ENCODE measurements at regions of chr7 and their contacts with region 1.

Region 1: DNA sequence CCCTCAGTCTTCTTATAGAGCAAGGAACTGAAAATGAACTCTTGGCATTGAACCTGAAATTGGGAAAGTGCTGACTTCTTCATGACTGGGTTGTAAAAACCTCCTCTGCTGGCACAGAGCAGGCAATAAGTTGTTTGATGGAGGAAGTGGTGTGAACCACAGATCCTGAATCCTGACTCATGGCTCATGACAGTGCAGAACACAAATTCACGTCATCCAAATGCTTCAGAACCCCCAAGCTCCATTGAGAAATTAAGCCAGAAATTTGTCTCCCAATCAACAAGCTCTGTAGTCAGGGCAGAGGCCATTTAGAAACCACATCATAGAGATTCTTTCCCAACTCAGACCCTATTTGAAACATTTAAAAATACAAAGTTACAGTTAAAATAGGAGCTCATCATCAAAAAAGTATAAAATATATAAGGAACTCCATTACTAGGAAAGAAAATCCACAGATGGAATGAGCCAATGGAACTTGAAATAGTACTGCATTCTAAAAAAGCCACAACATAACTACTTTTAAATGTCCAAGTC is 10.3 kb upstream of the STK17A start:
- DNase-seq: peak; percentile 30
- H3K4me3 Mint-ChIP-seq: no peak overlapping the region
- H3K27ac Mint-ChIP-seq: no peak overlapping the region
- H3K4me1 Mint-ChIP-seq: peaks cover 37% of the 10 kb centered on the region
- H3K27me3 Mint-ChIP-seq: no peaks in the 10 kb centered on the region

Region 2: GRCh38 chr7:43314379-43315189 is 258.0 kb before region 1 on chr7:
- intact Hi-C with region 1: loop called (anchors 10 kb)
- DNase-seq: no peak
- H3K4me3 Mint-ChIP-seq: no peak overlapping the region
- H3K27ac Mint-ChIP-seq: no peak overlapping the region
- H3K4me1 Mint-ChIP-seq: peaks cover 15% of the 10 kb centered on the region
- H3K27me3 Mint-ChIP-seq: peaks cover 24% of the 10 kb centered on the region

Region 3: GRCh38 chr7:43516581-43517342 is 55.8 kb before region 1 on chr7:
- intact Hi-C with region 1: loop called (anchors 5 kb)
- DNase-seq: no peak
- H3K4me3 Mint-ChIP-seq: no peak overlapping the region
- H3K27ac Mint-ChIP-seq: no peak overlapping the region
- H3K4me1 Mint-ChIP-seq: peaks cover 32% of the 10 kb centered on the region
- H3K27me3 Mint-ChIP-seq: peaks cover 13% of the 10 kb centered on the region

Region 4: GRCh38 chr7:44685723-44686122 is 1113.1 kb after region 1 on chr7:
- intact Hi-C with region 1: no loop called
- DNase-seq: no peak
- H3K4me3 Mint-ChIP-seq: no peak overlapping the region
- H3K27ac Mint-ChIP-seq: no peak overlapping the region
- H3K4me1 Mint-ChIP-seq: peaks cover 2% of the 10 kb centered on the region
- H3K27me3 Mint-ChIP-seq: no peaks in the 10 kb centered on the region

Measured in activated T-helper 2 cell treated with anti-CD3 and anti-CD28 coated beads, Interferon-gamma antibody, Interleukin-2, Interleukin-4, amounts not matched to agents 10 μg/mL and 5 μg/mL and 100 μg/mL, durations not matched to agents 14 hours and 24 hours and 36 hours (primary cell).